ENCODE measurements at regions of chr9 and their contacts with region 1.

Region 1: GRCh38 chr9:89000973-89001916 is 10.0 kb downstream of the S1PR3 start:
- DNase-seq: peak; percentile 93 to 95
- H3K4me3 ChIP-seq: peak overlapping the region in 3 of 4 donors; percentile 2 to 32 (median 14)
- H3K27ac ChIP-seq: peak overlapping the region in 4 of 5 donors; percentile 46 to 92 (median 61)
- H3K4me1 ChIP-seq: peaks cover 18 to 60% (median 41%) of the 10 kb centered on the region in 4 donors
- H3K27me3 ChIP-seq: no peaks in the 10 kb centered on the region
- CTCF ChIP-seq: peak in 5 of 7 experiments; percentile 65 to 87 (median 73)
- EP300 ChIP-seq: no peak
- POLR2A ChIP-seq: no peak

Region 2: DNA sequence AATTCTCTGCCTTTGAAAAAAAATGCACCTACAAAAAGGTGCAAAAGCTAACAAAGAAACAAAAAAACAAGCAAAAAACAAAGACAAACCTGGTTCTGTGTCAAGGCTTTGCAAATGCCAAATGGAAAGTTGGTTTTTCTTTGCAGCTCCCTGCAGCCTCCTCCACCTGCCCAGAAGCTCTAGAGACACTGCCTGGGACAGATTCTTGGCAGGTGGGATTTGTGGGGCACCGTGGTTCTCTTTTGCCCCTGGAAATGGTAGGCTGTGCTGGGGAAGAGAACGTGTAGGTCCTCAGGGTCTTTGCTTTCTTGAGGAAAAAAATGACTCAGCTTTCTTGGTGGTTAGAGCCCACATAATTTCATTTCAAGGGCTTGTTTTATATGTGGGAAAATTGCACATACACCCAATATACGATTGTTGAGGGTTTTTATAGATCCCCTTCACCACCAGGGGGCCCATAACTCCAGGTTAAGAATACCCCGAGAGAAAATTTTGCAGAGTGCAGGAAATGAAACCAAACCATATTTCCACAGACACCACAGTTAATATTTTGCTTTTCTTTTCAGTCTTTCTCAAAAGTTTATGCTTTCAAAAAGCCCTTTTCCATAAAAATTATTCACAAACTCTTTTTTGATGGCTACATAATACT is 407.6 kb before region 1 on chr9:
- intact Hi-C with region 1: loop called (anchors 5 kb)
- DNase-seq: peak; percentile 54 to 82
- H3K4me3 ChIP-seq: no peak overlapping the region
- H3K27ac ChIP-seq: no peak overlapping the region
- H3K4me1 ChIP-seq: peaks cover 0 to 6% (median 0%) of the 10 kb centered on the region in 4 donors
- H3K27me3 ChIP-seq: no peaks in the 10 kb centered on the region
- CTCF ChIP-seq: peak in 4 of 7 experiments; percentile 43 to 76 (median 67)
- EP300 ChIP-seq: no peak
- POLR2A ChIP-seq: no peak

Region 3: DNA sequence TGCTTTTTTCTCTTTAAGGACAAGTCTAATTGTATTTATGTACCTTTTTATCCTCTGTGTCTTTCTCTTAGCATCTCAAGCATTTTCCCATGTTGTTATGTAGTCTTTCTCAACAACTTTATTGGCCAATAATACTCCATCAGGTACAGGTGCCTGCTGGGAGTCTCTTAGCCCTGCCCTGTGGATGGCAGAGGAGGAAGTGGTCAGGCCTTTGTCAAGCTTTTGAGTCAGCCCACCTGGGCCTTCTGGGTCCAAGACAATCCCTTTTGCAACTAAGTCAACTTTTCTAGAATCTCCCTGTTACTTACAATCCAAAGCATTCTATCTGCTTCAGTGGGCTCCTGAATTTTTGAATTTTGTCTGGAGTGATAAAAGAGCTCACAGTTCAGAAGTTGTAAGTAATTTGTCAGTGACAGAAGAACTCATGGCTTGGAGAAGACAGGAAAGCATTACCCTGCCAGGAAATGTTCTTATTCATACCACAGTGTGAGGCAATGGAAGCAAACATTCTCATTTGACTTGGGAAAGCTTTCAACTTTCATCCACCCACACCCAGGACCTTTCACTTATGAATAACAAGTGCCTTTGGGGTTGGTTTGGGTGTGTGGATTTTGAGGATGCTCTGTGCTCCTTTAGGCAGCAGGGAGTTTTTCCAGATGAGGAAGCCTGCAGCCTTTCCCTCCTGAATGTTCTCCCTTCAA is 210.0 kb before region 1 on chr9:
- intact Hi-C with region 1: no loop called
- DNase-seq: no peak
- H3K4me3 ChIP-seq: no peak overlapping the region
- H3K27ac ChIP-seq: peak overlapping the region in 2 of 5 donors; percentile 20 to 54
- H3K4me1 ChIP-seq: peaks cover 0 to 15% (median 6%) of the 10 kb centered on the region in 4 donors
- H3K27me3 ChIP-seq: no peaks in the 10 kb centered on the region
- CTCF ChIP-seq: no peak
- EP300 ChIP-seq: no peak
- POLR2A ChIP-seq: no peak

Region 4: GRCh38 chr9:88949425-88949824 is 51.8 kb before region 1 on chr9:
- intact Hi-C with region 1: no loop called
- DNase-seq: peak; percentile 30 to 76
- H3K4me3 ChIP-seq: no peak overlapping the region
- H3K27ac ChIP-seq: peak overlapping the region in 2 of 5 donors; percentile 65 to 67
- H3K4me1 ChIP-seq: peaks cover 13 to 51% (median 29%) of the 10 kb centered on the region in 4 donors
- H3K27me3 ChIP-seq: no peaks in the 10 kb centered on the region
- CTCF ChIP-seq: no peak
- EP300 ChIP-seq: no peak
- POLR2A ChIP-seq: no peak